Activated CD4-positive, alpha-beta T cell treated with anti-CD3 and anti-CD28 coated beads, Interleukin-2, amount 10 ng/mL, durations not matched to agents 24 days and 14 days (primary cell): ENCODE measurements at regions of chr2 and their contacts with region 1.

Region 1: GRCh38 chr2:213806125-213806726 is 522.0 kb downstream of the SPAG16 start:
- DNase-seq: no peak
- H3K4me3 Mint-ChIP-seq: no peak overlapping the region
- H3K27ac Mint-ChIP-seq: no peak overlapping the region
- H3K4me1 Mint-ChIP-seq: no peaks in the 10 kb centered on the region
- H3K27me3 Mint-ChIP-seq: no peaks in the 10 kb centered on the region

Region 2: DNA sequence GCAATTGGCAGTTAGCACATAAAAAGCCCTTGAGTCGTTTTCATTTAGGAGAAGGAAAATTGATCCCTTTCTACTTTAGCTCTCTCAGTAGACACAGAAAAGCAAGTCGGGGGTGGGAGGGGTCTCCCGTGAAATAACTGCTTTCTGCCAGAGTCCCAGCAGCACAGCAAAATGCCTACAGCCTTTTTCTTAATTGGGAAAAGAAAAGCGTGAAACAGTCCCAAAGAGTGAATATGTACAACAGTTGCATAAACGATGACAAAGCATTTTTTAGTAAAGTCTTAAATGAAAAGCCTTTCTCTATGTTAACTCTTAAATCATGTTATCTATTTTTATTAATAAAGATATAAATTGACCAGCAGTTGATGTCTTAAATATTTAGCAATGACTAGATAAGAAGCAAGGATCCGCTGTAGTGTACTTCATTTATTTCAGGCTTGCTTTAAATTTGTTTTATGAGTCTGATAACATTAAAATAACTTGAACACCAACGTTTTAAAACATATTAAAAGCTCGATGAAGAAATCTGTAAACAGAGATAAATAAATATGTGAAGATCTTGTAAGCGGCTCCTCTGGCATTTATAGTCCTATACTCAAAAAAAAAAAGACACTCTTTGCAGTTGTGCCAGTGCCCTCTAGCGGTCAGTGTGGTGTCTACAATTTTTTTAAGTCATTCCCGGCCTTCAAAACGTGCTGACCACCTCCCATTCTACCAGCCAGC is 1463.3 kb after region 1 on chr2:
- intact Hi-C with region 1: loop called (anchors 5 kb)
- DNase-seq: peak; percentile 84
- H3K4me3 Mint-ChIP-seq: no peak overlapping the region
- H3K27ac Mint-ChIP-seq: no peak overlapping the region
- H3K4me1 Mint-ChIP-seq: peaks cover 2% of the 10 kb centered on the region
- H3K27me3 Mint-ChIP-seq: no peaks in the 10 kb centered on the region